Thyroid gland (tissue), 4 donors: ENCODE measurements at regions of chrX and their contacts with region 1.

Region 1: GRCh38 chrX:11143931-11144678 is 33.0 kb downstream of the HCCS start:
- DNase-seq: peak; percentile 49 to 50
- H3K4me3 ChIP-seq: no peak overlapping the region
- H3K27ac ChIP-seq: no peak overlapping the region
- H3K4me1 ChIP-seq: no peaks in the 10 kb centered on the region
- H3K27me3 ChIP-seq: no peaks in the 10 kb centered on the region
- CTCF ChIP-seq: peak; percentile 13 to 66 (median 51)
- POLR2A ChIP-seq: no peak

Region 2: GRCh38 chrX:10932842-10933440 is 211.2 kb before region 1 on chrX:
- intact Hi-C with region 1: no loop called
- DNase-seq: no peak
- H3K4me3 ChIP-seq: no peak overlapping the region
- H3K27ac ChIP-seq: no peak overlapping the region
- H3K4me1 ChIP-seq: no peaks in the 10 kb centered on the region
- H3K27me3 ChIP-seq: no peaks in the 10 kb centered on the region
- CTCF ChIP-seq: no peak
- POLR2A ChIP-seq: no peak

Region 3: GRCh38 chrX:11367609-11368430 is 223.7 kb after region 1 on chrX:
- intact Hi-C with region 1: no loop called
- DNase-seq: no peak
- H3K4me3 ChIP-seq: no peak overlapping the region
- H3K27ac ChIP-seq: no peak overlapping the region
- H3K4me1 ChIP-seq: no peaks in the 10 kb centered on the region
- H3K27me3 ChIP-seq: no peaks in the 10 kb centered on the region
- CTCF ChIP-seq: no peak
- POLR2A ChIP-seq: no peak

Region 4: DNA sequence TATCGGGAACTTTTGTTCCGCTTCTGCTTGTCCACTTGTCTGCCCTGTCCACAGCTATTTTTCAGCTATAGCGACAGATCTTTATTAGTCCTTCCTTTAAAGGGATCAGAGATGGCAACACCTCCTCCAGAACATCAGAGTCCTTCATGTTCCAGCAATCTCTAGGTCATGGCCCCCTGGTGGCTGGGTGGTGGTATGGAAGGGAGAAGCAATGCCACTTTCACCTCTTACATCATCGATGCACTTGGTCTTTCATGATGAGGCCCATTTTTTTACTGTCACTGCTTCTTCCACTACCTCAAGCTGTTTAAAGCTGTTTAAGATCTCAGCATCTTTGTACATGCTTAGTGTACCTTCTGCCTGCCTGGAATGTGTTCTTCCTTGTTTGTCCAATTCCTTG is 414.9 kb after region 1 on chrX:
- intact Hi-C with region 1: no loop called
- DNase-seq: peak; percentile 1 to 2
- H3K4me3 ChIP-seq: no peak overlapping the region
- H3K27ac ChIP-seq: no peak overlapping the region
- H3K4me1 ChIP-seq: no peaks in the 10 kb centered on the region
- H3K27me3 ChIP-seq: no peaks in the 10 kb centered on the region
- CTCF ChIP-seq: peak in 2 of 6 experiments; percentile 12 to 22
- POLR2A ChIP-seq: no peak

Region 5: GRCh38 chrX:11759461-11760311 is 615.6 kb after region 1 on chrX:
- intact Hi-C with region 1: loop called (anchors 10 kb)
- DNase-seq: peak; percentile 82 to 83
- H3K4me3 ChIP-seq: peak overlapping the region in 2 of 3 donors; percentile 35 to 36
- H3K27ac ChIP-seq: no peak overlapping the region
- H3K4me1 ChIP-seq: no peaks in the 10 kb centered on the region
- H3K27me3 ChIP-seq: no peaks in the 10 kb centered on the region
- CTCF ChIP-seq: peak in 1 of 6 experiments; percentile 7
- POLR2A ChIP-seq: peak in 1 of 2 donors; percentile 11